Activated CD4-positive, alpha-beta memory T cell treated with anti-CD3 and anti-CD28 coated beads for 36 hours (primary cell): ENCODE measurements at regions of chr1 and their contacts with region 1.

Region 1: GRCh38 chr1:25796811-25797458 is 3.1 kb upstream of the SELENON start:
- DNase-seq: peak; percentile 91
- H3K4me3 Mint-ChIP-seq: peak overlapping the region; percentile 42
- H3K27ac Mint-ChIP-seq: peak overlapping the region; percentile 72
- H3K4me1 Mint-ChIP-seq: peaks cover 40% of the 10 kb centered on the region
- H3K27me3 Mint-ChIP-seq: no peaks in the 10 kb centered on the region

Region 2: GRCh38 chr1:25562101-25562927 is 234.6 kb before region 1 on chr1:
- CTCF ChIA-PET with region 1: no interaction called
- POLR2A ChIA-PET with region 1: no interaction called
- intact Hi-C with region 1: loop called (anchors 5 kb)
- DNase-seq: peak; percentile 82
- H3K4me3 Mint-ChIP-seq: peak overlapping the region; percentile 62
- H3K27ac Mint-ChIP-seq: peak overlapping the region; percentile 85
- H3K4me1 Mint-ChIP-seq: peaks cover 91% of the 10 kb centered on the region
- H3K27me3 Mint-ChIP-seq: no peaks in the 10 kb centered on the region

Region 3: DNA sequence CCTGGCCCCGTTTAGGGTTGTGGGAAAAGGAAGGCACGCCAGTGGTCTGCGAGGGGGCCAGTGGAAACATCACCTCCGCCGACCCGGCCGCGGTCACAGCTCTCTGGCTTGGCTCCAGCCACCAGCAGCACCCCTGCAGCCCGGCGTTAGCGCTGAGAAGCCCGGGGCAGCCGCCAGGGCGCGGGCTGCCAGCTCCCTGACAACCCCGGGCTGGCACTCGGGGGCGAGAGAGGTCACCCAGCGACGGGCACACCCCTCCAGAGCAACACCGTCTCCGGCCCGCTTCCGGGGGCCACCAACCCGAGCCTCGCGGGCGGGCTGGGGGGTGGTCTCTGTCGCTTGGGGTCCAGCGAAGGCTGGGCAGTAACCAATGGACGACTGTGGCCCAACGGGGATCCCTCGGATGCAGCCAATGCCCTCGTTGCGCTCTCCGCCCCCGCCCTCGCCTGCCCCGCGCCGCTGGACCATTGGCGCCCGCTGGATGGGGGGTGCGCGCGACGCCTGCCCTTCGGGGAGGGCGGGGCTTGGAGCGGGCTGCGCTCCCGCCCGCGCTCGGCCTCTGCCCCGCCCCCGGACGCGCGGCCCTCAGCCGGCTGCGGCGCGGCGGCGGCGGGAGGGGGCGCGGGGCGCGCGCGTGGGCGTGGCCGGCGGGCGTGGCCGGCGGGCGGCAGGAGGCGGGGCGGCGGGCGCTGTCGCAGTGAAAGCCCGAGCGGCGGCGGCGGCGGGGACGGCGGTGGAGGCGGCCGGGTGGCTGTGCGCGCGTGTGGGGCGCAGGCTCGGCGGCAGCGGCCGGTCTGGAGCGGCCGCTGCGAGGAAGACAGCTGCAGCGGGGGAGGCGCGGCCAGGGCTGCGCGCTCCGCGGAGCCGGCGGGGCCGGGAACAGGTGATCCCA is 180.6 kb before region 1 on chr1 and contains the start of gene MAN1C1:
- CTCF ChIA-PET with region 1: interaction called, 15 read pairs
- POLR2A ChIA-PET with region 1: interaction called, 4 read pairs
- intact Hi-C with region 1: loop called (anchors 1 kb)
- DNase-seq: peak; percentile 81
- H3K4me3 Mint-ChIP-seq: peak within 1 kb of the TSS; percentile 61
- H3K27ac Mint-ChIP-seq: peak within 1 kb of the TSS; percentile 10
- H3K4me1 Mint-ChIP-seq: peaks cover 51% of the 10 kb centered on the region
- H3K27me3 Mint-ChIP-seq: peaks cover 12% of the 10 kb centered on the region
- total RNA-seq, gene MAN1C1: 4.6 to 4.8 TPM

Region 4: DNA sequence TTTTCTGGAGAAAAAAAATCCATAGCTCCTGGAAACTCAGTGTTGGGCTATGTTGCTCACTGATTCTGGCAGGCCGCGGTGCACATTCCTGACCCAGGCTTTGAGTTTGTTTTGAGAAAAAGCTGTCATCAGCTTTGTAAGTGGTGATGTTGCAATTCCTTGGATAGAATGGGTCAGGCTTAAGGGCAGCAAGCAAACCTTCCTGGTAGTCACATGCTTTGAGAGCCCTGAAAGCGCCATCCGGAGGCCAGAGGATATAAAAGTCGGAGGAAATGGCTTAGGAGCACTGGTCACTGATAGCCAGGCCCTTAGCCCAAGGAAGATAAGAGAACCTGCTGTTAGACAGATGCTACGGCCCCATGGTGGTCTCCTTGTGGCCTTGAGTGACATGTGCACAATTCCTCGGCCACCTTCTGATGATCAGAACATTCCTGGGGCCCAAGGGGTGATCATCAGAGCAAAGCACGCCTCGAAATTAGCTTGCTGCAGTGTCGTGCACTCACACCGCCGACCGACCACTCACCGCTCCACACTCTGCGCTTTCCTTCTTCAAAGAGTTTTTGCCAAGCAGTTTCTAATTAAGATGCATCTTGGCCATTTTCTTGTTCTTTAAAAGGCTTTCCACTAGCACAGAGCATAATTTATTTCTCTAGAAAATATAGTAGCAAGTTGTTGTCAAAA is 101.7 kb before region 1 on chr1:
- CTCF ChIA-PET with region 1: no interaction called
- POLR2A ChIA-PET with region 1: no interaction called
- intact Hi-C with region 1: loop called (anchors 5 kb)
- DNase-seq: no peak
- H3K4me3 Mint-ChIP-seq: no peak overlapping the region
- H3K27ac Mint-ChIP-seq: peak overlapping the region; percentile 59
- H3K4me1 Mint-ChIP-seq: peaks cover 45% of the 10 kb centered on the region
- H3K27me3 Mint-ChIP-seq: no peaks in the 10 kb centered on the region

Region 5: DNA sequence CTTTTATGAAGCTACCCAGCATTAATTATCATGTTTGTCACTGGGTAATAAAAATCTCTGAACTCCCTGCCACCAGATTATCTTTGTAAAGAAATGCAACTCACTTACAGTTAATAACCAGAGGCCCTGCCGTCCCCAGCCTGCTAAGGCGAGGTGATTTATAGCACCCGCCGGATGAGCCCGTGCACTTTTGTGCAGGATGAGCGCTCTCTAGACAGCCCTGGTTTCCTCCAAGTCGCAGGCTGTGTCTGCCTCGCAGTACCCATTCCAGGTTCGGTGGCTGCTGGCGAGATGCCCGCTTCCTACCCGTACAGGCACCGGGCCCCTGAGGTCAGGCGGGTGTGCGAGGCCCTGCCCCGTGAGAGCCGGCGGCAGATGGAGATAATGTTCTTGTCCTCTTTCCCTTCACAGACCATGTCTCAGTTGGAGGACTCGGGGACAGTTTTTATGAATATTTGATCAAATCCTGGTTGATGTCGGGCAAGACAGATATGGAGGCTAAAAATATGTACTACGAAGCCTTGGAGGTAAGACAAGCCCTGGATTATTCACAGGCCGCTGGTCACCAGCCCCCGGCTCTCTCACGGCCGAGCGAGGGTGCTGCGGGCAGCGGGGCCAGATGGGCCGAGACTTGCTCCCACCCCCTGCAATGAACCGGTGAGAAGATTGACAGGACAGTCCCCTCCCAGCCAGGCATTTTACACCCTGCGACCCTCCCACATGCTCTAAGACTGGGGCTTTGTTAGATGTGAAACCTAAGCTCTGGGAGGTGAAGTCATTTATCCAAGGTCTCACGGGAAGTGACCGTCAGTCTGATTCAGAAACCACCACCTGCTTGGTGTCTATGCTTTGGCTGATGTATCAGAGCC is 25.5 kb before region 1 on chr1:
- CTCF ChIA-PET with region 1: interaction called, 7 read pairs
- POLR2A ChIA-PET with region 1: no interaction called
- intact Hi-C with region 1: loop called (anchors 1 kb)
- DNase-seq: peak; percentile 30
- H3K4me3 Mint-ChIP-seq: no peak overlapping the region
- H3K27ac Mint-ChIP-seq: no peak overlapping the region
- H3K4me1 Mint-ChIP-seq: peaks cover 58% of the 10 kb centered on the region
- H3K27me3 Mint-ChIP-seq: no peaks in the 10 kb centered on the region

Region 6: DNA sequence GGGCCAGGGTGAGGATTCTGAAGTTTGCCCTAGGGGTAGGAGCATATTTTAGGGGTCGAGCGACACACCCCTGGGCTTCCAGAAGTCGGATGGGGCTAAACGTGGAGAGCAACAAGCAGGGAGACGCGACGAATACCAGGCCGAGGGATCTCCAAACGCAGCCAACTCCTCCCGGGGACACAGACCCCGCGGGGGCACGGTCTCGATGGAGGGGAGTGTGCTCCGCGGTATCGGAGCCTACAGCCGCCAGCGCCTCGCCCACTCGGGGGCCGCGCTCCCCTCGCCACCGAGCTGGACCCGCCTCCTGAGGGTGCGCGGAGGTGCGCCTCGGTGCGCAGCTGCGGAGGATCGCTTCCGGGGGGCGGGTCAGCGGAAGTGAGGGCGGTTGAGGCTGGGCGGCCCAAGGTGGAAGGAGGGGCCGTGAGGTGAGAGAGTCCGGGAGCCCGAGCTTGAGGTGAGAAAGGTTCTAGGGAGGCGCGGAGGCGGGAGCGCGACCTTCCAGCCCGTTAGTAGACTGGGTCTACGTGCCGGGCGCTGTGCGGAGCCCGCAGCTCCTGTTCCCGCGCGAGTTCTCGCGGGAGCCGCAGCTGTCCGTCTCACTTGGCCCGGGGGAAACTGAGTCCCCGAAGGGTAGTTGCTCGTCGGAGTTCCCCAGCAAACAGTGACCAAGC is 22.8 kb after region 1 on chr1 and contains the start of gene MTFR1L:
- CTCF ChIA-PET with region 1: no interaction called
- POLR2A ChIA-PET with region 1: no interaction called
- intact Hi-C with region 1: no loop called
- DNase-seq: peak; percentile 97
- H3K4me3 Mint-ChIP-seq: peak within 1 kb of the TSS; percentile 95
- H3K27ac Mint-ChIP-seq: peak within 1 kb of the TSS; percentile 89
- H3K4me1 Mint-ChIP-seq: peaks cover 33% of the 10 kb centered on the region
- H3K27me3 Mint-ChIP-seq: no peaks in the 10 kb centered on the region
- total RNA-seq, gene MTFR1L: 28.0 to 31.1 TPM

Region 7: DNA sequence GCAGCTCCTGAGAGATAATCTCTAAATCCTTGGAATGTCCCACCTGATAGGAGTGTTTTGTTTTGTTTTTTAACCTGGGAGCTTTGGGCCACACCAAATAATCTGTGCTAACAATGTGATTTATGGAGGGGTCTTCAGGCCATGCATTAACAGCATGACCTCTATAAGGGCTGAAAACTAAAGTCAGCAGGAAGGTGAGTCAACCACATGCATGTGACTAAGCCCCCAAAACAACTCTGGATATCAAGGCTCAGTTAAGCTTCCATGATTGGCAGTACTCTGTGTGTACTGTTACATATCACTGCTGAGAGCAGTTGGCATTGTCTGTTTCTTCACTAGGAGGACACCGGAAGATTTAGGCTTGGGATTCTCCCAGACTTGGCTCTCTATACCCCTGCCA is 51.6 kb after region 1 on chr1:
- CTCF ChIA-PET with region 1: no interaction called
- POLR2A ChIA-PET with region 1: no interaction called
- intact Hi-C with region 1: no loop called
- DNase-seq: no peak
- H3K4me3 Mint-ChIP-seq: no peak overlapping the region
- H3K27ac Mint-ChIP-seq: no peak overlapping the region
- H3K4me1 Mint-ChIP-seq: peaks cover 8% of the 10 kb centered on the region
- H3K27me3 Mint-ChIP-seq: no peaks in the 10 kb centered on the region